ENCODE measurements at regions of chr6 and their contacts with region 1.

Region 1: DNA sequence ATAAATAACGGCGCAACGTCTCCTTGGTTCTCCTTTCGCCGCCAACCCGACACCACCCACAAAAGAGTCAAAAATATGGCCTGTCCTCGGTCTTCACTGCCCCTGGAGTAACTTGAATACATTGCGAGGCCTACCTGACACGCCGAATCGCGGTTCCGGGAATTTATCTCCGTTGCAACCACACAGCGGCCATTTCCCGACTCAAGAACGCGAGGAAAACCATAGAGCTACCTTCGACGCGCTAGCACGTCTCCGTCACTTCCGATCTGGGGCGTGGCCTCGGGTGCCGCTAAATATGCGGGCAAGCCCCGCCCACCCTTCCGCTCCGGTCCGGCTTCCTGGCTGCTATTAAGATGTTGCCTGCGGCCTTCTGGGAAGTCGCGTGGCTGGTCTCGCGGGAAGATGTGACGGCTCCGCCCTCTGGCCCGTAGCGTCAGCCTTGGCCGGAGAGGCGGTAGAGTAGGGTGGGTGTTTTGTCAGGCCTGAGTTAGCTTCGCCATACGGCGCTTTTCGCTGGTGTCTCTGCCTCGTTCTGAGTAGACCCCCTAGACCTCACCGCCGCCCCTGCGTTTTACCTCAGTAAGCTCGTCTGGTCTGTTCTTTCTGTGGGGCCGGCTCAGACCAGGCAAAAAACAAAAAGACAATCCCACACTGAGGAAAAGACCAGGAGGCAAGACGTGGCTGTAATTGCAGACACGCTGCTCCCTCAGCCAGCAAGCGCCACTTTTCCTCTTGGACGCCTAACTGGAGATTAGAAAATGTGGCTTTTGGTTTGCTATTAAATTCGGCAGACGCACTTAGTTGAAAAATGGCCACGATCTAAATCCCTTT is at the start of gene BCLAF1:
- DNase-seq: peak; percentile 99
- ATAC-seq: peak; percentile 84
- H3K4me3 Mint-ChIP-seq: peak within 1 kb of the TSS; percentile 100
- H3K27ac Mint-ChIP-seq: peak within 1 kb of the TSS; percentile 100
- H3K4me1 Mint-ChIP-seq: peaks cover 36% of the 10 kb centered on the region
- H3K27me3 Mint-ChIP-seq: no peaks in the 10 kb centered on the region
- total RNA-seq, gene BCLAF1: 164 to 165 TPM

Region 2: DNA sequence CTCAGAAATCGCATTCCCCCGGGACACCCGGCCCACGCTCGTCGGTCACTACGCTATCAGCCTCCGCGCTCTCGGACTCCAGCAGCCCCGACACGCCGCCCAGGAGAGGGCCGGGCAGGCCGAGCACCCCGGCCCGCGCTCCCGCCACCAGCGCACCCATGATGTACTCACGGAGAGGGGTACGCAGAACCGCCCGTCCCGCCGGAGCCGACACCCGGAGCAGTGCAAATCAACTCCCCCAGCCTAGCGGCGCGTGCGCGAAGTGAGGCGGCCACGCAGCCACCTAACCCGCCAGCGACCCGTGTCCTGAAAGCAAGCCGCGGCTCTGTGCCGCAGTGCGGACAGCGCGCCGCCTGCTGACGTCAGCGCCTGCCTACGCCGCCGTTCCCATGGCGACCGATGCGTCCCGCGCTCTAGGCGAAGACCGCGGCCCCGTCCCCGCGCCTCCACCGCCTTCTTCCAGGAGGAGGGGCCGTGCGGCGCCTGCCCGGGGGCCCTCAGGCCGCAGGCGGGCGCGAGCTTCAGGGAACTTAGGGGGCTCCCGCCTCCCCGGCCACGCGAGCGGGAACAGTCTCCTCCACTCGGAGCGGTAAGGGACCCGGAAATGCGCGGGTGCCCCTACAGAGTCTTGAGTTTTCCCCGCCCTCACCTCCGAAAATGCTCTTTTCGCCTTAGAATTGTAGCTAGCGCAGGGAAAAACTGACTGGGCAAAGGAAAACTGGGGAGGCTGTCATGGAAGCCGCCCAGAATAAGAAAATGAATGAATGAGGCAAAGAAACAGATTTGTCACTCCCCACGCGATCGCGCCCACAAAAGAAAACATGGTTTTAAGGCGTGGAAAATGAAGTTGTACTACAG is 792.2 kb before region 1 on chr6 and contains the start of gene AHI1:
- POLR2A ChIA-PET with region 1: interaction called, 33 read pairs
- DNase-seq: peak; percentile 93
- ATAC-seq: peak; percentile 79
- H3K4me3 Mint-ChIP-seq: peak within 1 kb of the TSS; percentile 24
- H3K27ac Mint-ChIP-seq: no peak within 1 kb of the TSS
- H3K4me1 Mint-ChIP-seq: peaks cover 10% of the 10 kb centered on the region
- H3K27me3 Mint-ChIP-seq: no peaks in the 10 kb centered on the region
- total RNA-seq, gene AHI1: 19.9 to 21.4 TPM

Region 3: DNA sequence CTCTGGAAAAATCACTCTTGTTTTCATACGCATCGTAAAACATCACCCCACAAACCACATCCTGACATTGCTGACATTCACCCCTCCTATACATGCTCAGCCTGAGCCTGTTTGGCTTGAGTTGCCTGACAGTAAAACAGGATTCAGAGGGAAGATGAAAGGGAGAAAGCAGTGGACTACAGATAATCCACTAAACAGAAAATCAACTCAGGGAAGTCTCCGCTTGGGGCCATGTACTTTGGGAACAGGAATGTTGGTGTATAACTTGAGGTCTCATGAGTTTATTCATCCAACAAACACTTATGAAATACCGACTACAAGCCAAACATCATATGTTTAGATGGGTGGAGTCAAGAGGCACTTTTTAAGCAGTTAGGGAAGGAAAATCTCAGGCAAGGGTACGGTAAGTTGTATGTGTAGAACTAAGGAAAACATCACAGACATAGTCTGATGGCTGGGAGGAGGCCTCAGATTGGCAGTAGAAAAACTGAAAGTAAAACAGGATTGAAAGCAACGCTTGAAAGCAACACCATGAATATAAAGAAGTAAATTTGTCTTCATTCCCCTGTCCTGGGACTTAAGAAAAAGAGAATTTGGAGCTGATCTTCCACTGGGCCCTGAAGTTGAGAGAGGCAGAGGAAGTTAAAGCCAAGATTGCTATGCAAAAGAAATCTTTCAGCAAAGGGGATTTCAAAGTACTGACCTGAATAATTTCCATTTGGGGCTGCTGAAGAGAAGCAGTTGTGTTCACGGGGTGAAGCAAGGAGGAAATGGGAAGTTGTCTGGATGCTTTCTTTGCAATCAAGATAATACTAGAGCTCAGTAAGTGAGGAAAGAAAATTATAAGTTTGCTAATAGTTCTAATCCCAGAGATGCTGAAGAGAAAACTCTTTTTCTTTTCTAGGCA is 409.5 kb before region 1 on chr6:
- POLR2A ChIA-PET with region 1: interaction called, 11 read pairs
- DNase-seq: peak; percentile 34
- ATAC-seq: peak; percentile 93
- H3K4me3 Mint-ChIP-seq: peak overlapping the region; percentile 81
- H3K27ac Mint-ChIP-seq: peak overlapping the region; percentile 93
- H3K4me1 Mint-ChIP-seq: peaks cover 25% of the 10 kb centered on the region
- H3K27me3 Mint-ChIP-seq: no peaks in the 10 kb centered on the region

Region 4: GRCh38 chr6:136249811-136250685 is 39.7 kb before region 1 on chr6 and contains the start of gene MTFR2:
- POLR2A ChIA-PET with region 1: interaction called, 123 read pairs
- DNase-seq: peak; percentile 83
- ATAC-seq: peak; percentile 97
- H3K4me3 Mint-ChIP-seq: peak within 1 kb of the TSS; percentile 94
- H3K27ac Mint-ChIP-seq: peak within 1 kb of the TSS; percentile 93
- H3K4me1 Mint-ChIP-seq: peaks cover 38% of the 10 kb centered on the region
- H3K27me3 Mint-ChIP-seq: no peaks in the 10 kb centered on the region
- total RNA-seq, gene MTFR2: 15.0 to 16.9 TPM

Region 5: DNA sequence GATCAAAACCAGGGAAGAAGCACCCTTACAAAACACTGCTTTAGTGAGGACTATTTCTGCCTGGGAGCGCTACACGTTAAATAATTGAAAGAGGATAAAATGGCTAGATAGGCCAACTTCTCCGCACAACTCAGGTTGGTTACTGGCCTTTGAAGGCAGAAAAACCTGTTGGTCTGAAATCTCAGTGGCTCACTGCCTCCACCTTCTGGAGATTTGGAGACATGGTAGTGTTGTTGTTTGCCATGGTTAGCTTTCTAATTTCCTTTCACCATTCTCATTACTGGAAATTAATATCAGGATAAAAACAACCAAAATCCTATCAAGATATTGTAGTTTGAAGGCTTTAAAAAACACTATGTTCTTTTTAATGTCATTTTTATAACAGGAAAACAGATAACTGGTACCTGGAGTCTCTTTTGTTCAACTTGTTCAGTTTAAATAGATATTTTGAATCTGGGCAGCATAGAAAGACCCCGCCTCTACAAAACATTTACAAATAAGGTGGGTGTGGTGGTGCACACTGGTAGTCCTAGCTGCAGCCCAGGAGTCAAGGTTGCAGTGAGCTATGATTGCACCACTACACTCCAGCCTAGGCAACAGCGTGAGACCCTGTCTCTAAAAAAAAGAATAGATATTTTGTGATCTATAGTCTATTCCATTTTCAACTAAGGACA is 27.4 kb after region 1 on chr6:
- POLR2A ChIA-PET with region 1: interaction called, 17 read pairs
- DNase-seq: no peak
- ATAC-seq: peak; percentile 90
- H3K4me3 Mint-ChIP-seq: no peak overlapping the region
- H3K27ac Mint-ChIP-seq: no peak overlapping the region
- H3K4me1 Mint-ChIP-seq: no peaks in the 10 kb centered on the region
- H3K27me3 Mint-ChIP-seq: peaks cover 16% of the 10 kb centered on the region

Measured in activated naive CD8-positive, alpha-beta T cell treated with anti-CD3 and anti-CD28 coated beads, Interleukin-2, amount 10 ng/mL, durations not matched to agents 7 days and 5 days (primary cell).